SK-N-SH (cell line): ENCODE measurements at regions of chr3 and their contacts with region 1.

Region 1: GRCh38 chr3:160941885-160942494 is 163.2 kb downstream of the B3GALNT1 start:
- DNase-seq: peak; percentile 44
- H3K4me3 ChIP-seq: no peak overlapping the region
- H3K27ac ChIP-seq: no peak overlapping the region
- H3K4me1 ChIP-seq: no peaks in the 10 kb centered on the region
- H3K27me3 ChIP-seq: no peaks in the 10 kb centered on the region
- CTCF ChIP-seq: peak; percentile 83
- EP300 ChIP-seq: no peak
- RAD21 ChIP-seq: peak; percentile 91

Region 2: DNA sequence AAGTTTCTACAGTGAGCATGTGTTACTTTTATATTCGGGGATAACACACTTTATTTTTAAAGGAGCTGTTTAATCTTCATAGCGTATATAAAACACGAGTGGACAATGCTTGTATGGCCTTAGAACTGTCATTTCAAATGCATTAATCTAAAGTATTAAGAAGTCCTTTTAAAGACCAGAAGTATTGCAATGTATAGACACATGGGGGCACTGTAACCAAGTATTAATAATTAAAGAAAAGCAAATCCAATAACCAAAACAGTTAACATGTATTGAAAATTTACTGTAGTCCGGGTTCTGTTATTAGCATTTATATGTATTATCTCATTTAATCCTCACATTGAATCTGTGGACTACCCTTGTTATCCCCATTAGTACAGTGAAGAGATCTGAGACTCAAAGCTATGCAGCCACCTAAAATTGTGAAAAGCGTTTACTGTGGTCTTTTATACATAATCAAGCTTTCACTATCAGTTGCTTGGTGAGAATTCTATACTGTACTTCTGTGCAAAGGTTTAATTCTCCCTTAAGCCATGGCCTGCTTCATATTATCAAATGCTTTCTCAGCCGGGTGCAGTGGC is 254.9 kb before region 1 on chr3:
- CTCF ChIA-PET with region 1: interaction called, 10 read pairs
- POLR2A ChIA-PET with region 1: no interaction called
- DNase-seq: peak; percentile 12
- H3K4me3 ChIP-seq: no peak overlapping the region; a peak in 1 of 4 replicates
- H3K27ac ChIP-seq: no peak overlapping the region
- H3K4me1 ChIP-seq: no peaks in the 10 kb centered on the region
- H3K27me3 ChIP-seq: no peaks in the 10 kb centered on the region
- CTCF ChIP-seq: peak; percentile 65
- EP300 ChIP-seq: no peak
- RAD21 ChIP-seq: peak; percentile 51

Region 3: DNA sequence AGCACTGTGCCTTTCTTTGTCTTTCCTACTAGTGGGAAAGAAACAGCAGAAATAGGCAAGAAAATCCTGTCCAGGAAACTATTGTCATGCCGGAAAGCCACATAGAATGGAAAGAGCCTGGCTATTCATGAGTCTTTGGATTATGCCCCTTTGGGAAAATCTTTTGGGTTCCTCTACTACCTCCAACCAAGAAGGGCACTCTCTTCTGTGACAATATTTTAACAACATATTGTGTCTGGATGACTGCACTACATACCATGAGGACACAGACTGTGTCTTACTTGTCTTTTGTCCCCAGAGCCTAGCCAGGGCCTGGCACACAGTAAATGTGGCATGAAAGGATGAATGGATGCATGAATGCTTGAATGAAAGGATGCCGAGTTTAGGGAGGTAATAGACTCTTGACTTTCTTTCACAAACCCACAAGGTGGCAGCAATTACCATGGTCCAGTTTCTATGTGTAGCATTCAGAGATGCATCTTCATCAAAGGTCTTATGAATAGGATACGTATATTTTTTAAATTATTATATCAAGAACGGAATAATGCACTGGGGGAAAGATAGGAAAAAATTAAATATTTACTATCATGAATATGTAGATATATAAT is 234.7 kb before region 1 on chr3:
- CTCF ChIA-PET with region 1: interaction called, 34 read pairs
- POLR2A ChIA-PET with region 1: no interaction called
- DNase-seq: peak; percentile 53
- H3K4me3 ChIP-seq: no peak overlapping the region; a peak in 1 of 4 replicates
- H3K27ac ChIP-seq: no peak overlapping the region
- H3K4me1 ChIP-seq: no peaks in the 10 kb centered on the region
- H3K27me3 ChIP-seq: no peaks in the 10 kb centered on the region
- CTCF ChIP-seq: peak; percentile 59
- EP300 ChIP-seq: no peak
- RAD21 ChIP-seq: peak; percentile 91

Region 4: DNA sequence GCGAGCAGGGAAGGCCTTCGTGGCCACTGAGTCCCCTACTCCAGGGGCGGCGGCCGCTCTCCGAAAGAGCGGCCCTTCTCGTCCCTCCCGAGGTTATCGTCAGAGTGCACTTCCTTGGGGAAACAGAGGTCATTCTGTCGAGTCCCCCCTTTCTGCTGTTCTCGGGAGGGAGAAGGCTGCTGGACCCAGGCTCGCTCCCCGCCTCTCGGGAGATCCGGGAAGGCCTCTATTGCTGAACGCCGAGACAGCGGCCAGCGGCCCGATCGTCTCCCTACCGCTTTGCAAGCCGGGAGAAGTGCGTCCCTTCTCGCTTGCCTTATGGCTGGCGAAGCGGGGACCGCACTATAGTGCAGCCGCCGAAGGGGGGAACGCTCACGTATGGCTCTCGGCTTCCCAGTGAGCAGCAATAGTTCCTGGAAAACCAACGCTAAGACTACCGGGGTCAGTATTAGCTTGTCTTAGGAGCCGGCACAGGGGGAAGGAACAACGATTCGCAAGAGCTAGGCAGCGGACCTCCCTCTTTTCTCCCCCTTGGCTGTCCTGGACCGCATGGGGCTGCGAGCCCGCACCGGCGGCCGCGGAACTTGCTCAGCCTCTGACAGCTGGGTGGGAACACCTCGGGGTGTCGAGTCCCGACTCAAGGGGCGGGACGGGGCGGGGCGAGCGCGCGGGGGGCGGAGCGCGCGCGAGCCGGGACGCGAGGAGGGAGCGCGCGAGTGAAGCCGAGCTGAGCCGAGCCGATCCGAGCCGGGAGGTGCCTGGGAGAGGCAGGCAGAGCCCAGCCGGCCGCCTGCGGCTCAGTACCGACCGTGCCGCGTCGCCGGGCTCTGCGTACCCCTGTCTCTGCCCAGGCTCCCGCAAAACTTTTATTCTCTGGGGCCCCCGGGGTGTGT is 186.9 kb before region 1 on chr3:
- CTCF ChIA-PET with region 1: interaction called, 24 read pairs
- POLR2A ChIA-PET with region 1: no interaction called
- DNase-seq: peak; percentile 94
- H3K4me3 ChIP-seq: peak overlapping the region; percentile 74 to 86
- H3K27ac ChIP-seq: peak overlapping the region; percentile 72 to 92
- H3K4me1 ChIP-seq: peaks cover 0 to 16% of the 10 kb centered on the region in 2 experiments; a peak in 2 of 4 replicates
- H3K27me3 ChIP-seq: peaks cover 12% of the 10 kb centered on the region; the same call in 1 of the 2 replicates
- CTCF ChIP-seq: no peak
- EP300 ChIP-seq: peak in 1 of 2 experiments; percentile 47; a peak in 2 of 4 replicates
- RAD21 ChIP-seq: no peak

Region 5: DNA sequence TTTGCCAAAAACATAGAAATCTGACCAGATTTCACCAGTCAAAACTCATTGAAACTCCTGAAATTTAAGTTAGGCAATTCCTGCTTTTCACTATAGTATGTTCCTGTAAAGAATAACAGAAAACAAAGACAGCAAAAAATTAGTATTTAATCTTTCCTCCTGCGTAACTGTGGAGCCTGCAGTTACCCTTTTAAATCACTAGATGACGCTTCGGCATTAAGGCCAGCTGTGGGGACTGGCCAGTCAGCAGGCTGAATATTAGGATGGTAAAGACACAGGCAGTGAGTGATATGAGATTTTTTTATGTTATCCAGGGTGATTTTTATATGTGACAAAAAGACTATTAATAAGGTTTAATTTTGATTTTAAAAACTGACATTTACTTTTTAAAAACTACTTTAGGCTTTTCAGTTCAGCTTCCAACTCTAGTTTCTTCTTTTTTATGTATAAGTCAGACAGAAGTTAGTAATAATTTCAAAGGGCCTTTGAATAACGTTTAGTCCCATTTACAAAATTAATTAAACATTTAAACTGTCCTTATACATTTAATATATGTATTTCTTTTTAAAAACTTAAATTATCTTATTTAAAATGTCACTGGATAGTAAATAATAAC is 20.9 kb before region 1 on chr3:
- CTCF ChIA-PET with region 1: interaction called, 26 read pairs
- POLR2A ChIA-PET with region 1: no interaction called
- DNase-seq: peak; percentile 58
- H3K4me3 ChIP-seq: peak overlapping the region in 1 of 2 experiments; percentile 31; a peak in 1 of 4 replicates
- H3K27ac ChIP-seq: no peak overlapping the region
- H3K4me1 ChIP-seq: no peaks in the 10 kb centered on the region; a peak in 1 of 4 replicates
- H3K27me3 ChIP-seq: no peaks in the 10 kb centered on the region
- CTCF ChIP-seq: peak; percentile 88
- EP300 ChIP-seq: no peak
- RAD21 ChIP-seq: peak; percentile 89

Region 6: GRCh38 chr3:160929595-160929994 is 12.4 kb before region 1 on chr3:
- CTCF ChIA-PET with region 1: interaction called, 33 read pairs
- POLR2A ChIA-PET with region 1: no interaction called
- DNase-seq: peak; percentile 29
- H3K4me3 ChIP-seq: no peak overlapping the region
- H3K27ac ChIP-seq: no peak overlapping the region
- H3K4me1 ChIP-seq: peaks cover 0 to 9% of the 10 kb centered on the region in 2 experiments; a peak in 2 of 4 replicates
- H3K27me3 ChIP-seq: no peaks in the 10 kb centered on the region
- CTCF ChIP-seq: no peak
- EP300 ChIP-seq: no peak
- RAD21 ChIP-seq: peak; percentile 40; the same call in 1 of the 2 replicates